ENCODE measurements at regions of chr15 and their contacts with region 1.

Region 1: GRCh38 chr15:64825431-64826294 is at the start of gene PIF1:
- DNase-seq: peak; percentile 64 to 97 (median 86)

Region 2: GRCh38 chr15:64905119-64905831 is 79.6 kb after region 1 on chr15:
- intact Hi-C with region 1: loop called (anchors 5 kb)
- DNase-seq: peak; percentile 47 to 97 (median 81)